ENCODE measurements at regions of chr3 and their contacts with region 1.

Region 1: GRCh38 chr3:58332575-58333188 is at the start of gene PXK:
- DNase-seq: peak in 1 of 2 experiments; percentile 70
- H3K4me3 ChIP-seq: peak within 1 kb of the TSS; percentile 72
- H3K27ac ChIP-seq: 0 out of 2 replicates have a peak within 1 kb of the TSS, but pooled peaks have one; percentile 15
- H3K4me1 ChIP-seq: peaks cover 30% of the 10 kb centered on the region
- H3K27me3 ChIP-seq: no peaks in the 10 kb centered on the region
- CTCF ChIP-seq: no peak
- total RNA-seq, gene PXK: 3.3 and 4.4 TPM in 2 replicates

Region 2: DNA sequence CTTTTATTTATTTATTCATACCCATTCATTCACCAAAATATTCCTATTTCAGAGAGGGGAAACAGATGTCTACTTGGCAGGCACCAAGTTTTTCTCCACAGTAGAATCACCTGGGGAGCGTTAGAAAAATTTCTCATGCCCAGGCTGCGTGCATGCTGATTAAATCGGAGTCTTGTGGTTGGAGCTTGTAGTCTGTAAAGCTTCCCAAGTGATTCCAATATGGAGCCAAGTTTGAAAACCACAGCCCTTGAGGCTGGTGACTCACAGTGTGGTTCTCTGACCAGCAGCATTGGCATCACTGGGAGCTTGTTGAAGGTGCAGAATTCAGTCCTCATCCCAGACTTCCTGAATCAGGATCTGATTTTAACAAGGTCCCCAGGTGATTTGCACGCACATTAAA is 51.2 kb after region 1 on chr3:
- CTCF ChIA-PET with region 1: no interaction called
- POLR2A ChIA-PET with region 1: no interaction called
- intact Hi-C with region 1: loop called (anchors 5 kb)
- DNase-seq: peak; percentile 77 to 93
- H3K4me3 ChIP-seq: no peak overlapping the region
- H3K27ac ChIP-seq: no peak overlapping the region
- H3K4me1 ChIP-seq: peaks cover 7% of the 10 kb centered on the region
- H3K27me3 ChIP-seq: no peaks in the 10 kb centered on the region
- CTCF ChIP-seq: no peak

Region 3: DNA sequence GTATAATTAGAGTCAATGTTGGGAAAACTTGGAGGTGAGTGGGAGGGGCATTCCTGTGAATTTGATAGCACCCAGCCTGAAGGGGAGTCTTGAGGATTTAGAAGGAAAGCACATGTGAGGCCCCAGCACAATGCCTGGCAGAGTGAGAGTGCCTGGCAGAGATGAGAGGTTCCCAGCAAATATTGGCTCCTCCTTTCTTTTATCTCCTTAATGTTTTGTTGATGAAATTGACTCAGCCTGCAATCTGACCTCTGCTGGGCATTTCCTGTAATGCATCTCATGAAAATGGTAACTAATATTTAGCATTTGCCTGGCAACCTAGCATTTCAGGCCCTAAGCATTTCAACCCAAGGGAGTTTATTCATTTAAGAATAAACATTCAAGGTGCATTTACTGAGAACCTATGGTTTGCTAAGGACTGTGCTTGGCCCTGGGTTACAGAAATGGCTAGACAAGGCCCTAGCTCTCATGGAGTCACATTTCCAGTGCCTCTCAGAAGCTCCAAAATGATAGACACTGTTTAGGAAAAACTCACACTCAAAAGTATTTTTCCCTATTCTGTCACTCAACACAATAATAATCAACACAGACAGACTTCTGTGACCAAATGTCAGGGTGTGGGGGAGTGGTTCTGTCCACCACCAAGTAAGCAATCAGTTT is 82.0 kb after region 1 on chr3:
- CTCF ChIA-PET with region 1: interaction called, 7 read pairs
- POLR2A ChIA-PET with region 1: no interaction called
- intact Hi-C with region 1: loop called (anchors 2 kb)
- DNase-seq: peak; percentile 34 to 50
- H3K4me3 ChIP-seq: no peak overlapping the region
- H3K27ac ChIP-seq: no peak overlapping the region
- H3K4me1 ChIP-seq: peaks cover 5% of the 10 kb centered on the region; the same call in 1 of the 2 replicates
- H3K27me3 ChIP-seq: no peaks in the 10 kb centered on the region
- CTCF ChIP-seq: peak; percentile 82

Measured in PC-9 (cell line).